ENCODE measurements at regions of chr12 and their contacts with region 1.

Region 1: GRCh38 chr12:85280984-85281630 is 1.1 kb downstream of the ALX1 start:
- DNase-seq: no peak
- H3K4me3 Mint-ChIP-seq: peak overlapping the region; percentile 72
- H3K27ac Mint-ChIP-seq: no peak overlapping the region
- H3K4me1 Mint-ChIP-seq: peaks cover 7% of the 10 kb centered on the region
- H3K27me3 Mint-ChIP-seq: peaks cover 49% of the 10 kb centered on the region

Region 2: DNA sequence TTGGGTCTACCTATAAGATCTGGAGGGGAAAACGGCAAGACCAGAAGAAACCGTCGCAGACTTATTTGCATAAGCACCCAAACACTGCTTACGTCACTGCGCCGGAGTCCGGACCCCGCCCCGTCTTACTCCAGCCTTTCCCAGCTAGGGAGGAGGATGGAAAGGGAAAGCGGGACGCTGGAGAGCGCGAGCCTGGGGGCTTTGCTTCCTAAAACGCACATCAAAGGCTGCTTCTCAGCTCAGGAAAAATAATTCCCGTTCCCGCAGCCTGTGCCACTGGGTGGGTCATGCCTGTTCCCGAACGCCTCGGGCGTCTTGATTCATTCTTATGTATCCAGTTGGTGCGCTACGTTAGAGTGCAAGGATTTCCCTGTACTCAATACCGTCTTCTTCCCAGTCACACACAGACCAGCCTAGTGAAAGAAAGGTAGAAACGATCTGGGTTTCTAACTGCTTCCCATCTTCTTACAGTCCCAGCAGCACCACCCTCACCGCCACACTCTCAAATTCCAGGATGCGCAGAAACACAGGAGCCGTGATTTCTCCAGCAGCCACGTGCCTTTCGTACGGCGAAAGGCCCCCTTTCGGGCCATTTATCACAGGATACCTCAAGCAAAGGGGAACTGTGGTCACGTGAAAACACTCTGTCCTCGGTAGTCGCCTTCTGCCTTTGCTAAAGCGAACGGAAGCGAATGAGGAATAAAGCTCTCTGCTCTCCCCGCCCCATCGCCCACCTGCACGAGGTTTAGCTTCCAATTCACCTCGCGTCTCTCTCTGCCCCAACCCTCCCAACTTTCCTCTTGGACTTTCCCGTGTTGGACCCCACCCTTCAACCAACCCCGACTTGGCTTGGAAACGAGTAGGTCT is 369.5 kb before region 1 on chr12:
- intact Hi-C with region 1: loop called (anchors 2 kb)
- DNase-seq: no peak
- H3K4me3 Mint-ChIP-seq: peak overlapping the region; percentile 59
- H3K27ac Mint-ChIP-seq: no peak overlapping the region
- H3K4me1 Mint-ChIP-seq: peaks cover 16% of the 10 kb centered on the region
- H3K27me3 Mint-ChIP-seq: peaks cover 42% of the 10 kb centered on the region

Region 3: GRCh38 chr12:85301051-85301450 is 19.9 kb after region 1 on chr12:
- intact Hi-C with region 1: no loop called
- DNase-seq: no peak
- H3K4me3 Mint-ChIP-seq: no peak overlapping the region
- H3K27ac Mint-ChIP-seq: no peak overlapping the region
- H3K4me1 Mint-ChIP-seq: peaks cover 6% of the 10 kb centered on the region
- H3K27me3 Mint-ChIP-seq: peaks cover 2% of the 10 kb centered on the region

Measured in activated T-helper 1 cell treated with anti-CD3 and anti-CD28 coated beads, Interleukin-12 subunit alpha, Interleukin-12 subunit beta, Interleukin-2, Interleukin-4 antibody, amounts not matched to agents 30 ng/mL and 10 ng/mL and 1 ng/mL, durations not matched to agents 14 hours and 24 hours and 36 hours (primary cell).